GM12878 (cell line): ENCODE measurements at regions of chr17 and their contacts with region 1.

Region 1: DNA sequence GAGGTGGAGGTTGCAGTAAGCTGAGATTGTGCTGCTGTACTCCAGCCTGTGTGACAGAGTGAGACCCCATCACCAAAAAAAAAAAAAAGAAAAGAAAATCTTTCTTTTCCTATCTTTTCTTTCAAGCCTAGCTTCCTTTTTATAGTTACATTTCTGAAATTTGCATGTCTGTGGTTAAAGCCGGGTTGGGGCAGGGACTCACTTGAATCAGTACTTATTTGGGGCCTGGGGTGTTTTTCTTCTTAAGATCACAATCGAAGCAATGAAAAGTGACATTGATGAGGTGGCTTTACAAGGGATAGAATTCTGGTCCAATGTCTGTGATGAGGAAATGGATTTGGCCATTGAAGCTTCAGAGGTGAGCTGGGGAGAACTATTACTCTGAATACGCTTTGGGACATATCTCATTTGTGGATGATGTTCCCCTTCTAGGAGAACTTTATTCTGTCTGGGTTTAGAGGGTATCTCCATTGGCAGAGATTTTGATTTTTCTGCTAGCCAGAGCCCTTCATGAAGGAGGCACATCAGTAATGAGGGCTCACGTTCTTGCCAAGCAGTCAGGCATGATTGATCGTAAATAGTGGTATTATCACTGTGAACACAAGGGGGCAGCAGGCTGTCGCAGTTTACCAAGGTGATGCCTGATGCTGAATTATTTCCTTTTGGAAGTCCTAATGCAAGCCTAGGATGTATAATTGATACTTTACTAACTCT is 14.3 kb downstream of the KPNB1 start:
- DNase-seq: peak; percentile 41
- ATAC-seq: peak; percentile 84
- H3K4me3 ChIP-seq: 0 out of 2 replicates have a peak overlapping the region, but pooled peaks have one; percentile 35
- H3K27ac ChIP-seq: peak overlapping the region; percentile 50
- H3K4me1 ChIP-seq: peaks cover 32% of the 10 kb centered on the region
- H3K27me3 ChIP-seq: no peaks in the 10 kb centered on the region
- CTCF ChIP-seq: peak; percentile 71 to 87 (median 72)
- EP300 ChIP-seq: no peak
- POLR2A ChIP-seq: peak; percentile 56; the same call in 1 of the 2 replicates
- RAD21 ChIP-seq: peak; percentile 55

Region 2: GRCh38 chr17:47649153-47649971 is 14.7 kb before region 1 on chr17 and contains the start of gene KPNB1:
- CTCF ChIA-PET with region 1: interaction called, 75 read pairs
- POLR2A ChIA-PET with region 1: interaction called, 18 read pairs
- RAD21 ChIA-PET with region 1: interaction called, 21 read pairs
- SMC1A ChIA-PET with region 1: interaction called, 20 read pairs
- in situ Hi-C with region 1: no loop called
- intact Hi-C with region 1: no loop called
- DNase-seq: peak; percentile 99
- ATAC-seq: peak; percentile 88
- H3K4me3 ChIP-seq: peak within 1 kb of the TSS; percentile 84
- H3K27ac ChIP-seq: peak within 1 kb of the TSS; percentile 99
- H3K4me1 ChIP-seq: peaks cover 22% of the 10 kb centered on the region
- H3K27me3 ChIP-seq: no peaks in the 10 kb centered on the region
- CTCF ChIP-seq: no peak
- EP300 ChIP-seq: peak in 1 of 2 experiments; percentile 52; a peak in 2 of 4 replicates
- POLR2A ChIP-seq: peak; percentile 76
- RAD21 ChIP-seq: no peak
- polyA plus RNA-seq, gene KPNB1: 130 to 233 TPM

Region 3: DNA sequence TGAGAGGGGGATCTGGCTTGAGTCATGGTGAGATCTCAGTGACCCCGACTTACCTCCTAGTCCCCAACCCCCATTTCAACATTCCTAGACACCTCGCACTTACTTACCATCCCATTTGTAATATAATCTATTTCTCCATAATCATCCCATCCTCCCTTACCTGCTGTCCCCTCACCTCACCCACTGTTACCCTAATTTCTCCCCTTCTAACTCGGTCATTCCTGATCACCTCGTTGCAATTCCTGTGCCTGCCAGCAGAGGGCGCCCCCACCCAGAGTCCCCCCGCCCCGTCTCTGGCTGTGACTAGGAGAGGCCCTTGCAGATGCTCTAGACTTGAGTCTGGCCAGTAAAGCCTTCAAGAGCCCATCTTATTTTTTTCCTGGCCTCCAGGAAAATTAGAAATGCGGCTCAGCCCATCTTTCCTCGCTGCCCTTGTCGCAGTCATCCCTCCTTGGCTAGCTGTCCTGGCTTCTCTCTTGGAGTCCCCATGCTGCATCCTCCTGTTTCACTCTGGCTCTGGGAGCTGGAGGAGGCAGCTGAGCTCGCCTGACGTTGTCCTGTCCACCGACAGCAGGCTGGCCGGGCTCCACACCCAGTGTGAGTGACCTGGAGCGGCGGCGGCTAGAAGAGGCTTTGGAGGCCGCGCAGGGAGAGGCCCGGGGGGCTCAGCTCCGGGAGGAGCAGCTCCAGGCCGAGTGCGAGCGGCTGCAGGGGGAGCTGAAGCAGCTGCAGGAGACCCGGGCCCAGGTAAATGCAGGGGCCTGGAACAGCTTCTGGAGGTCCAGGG is 34.9 kb after region 1 on chr17:
- CTCF ChIA-PET with region 1: interaction called, 30 read pairs
- POLR2A ChIA-PET with region 1: no interaction called
- RAD21 ChIA-PET with region 1: interaction called, 8 read pairs
- SMC1A ChIA-PET with region 1: interaction called, 4 read pairs
- in situ Hi-C with region 1: no loop called
- intact Hi-C with region 1: no loop called
- DNase-seq: no peak
- ATAC-seq: peak; percentile 60
- H3K4me3 ChIP-seq: no peak overlapping the region
- H3K27ac ChIP-seq: no peak overlapping the region
- H3K4me1 ChIP-seq: peaks cover 22% of the 10 kb centered on the region
- H3K27me3 ChIP-seq: no peaks in the 10 kb centered on the region; a peak in 1 of 4 replicates
- CTCF ChIP-seq: peak; percentile 86 to 97 (median 88)
- EP300 ChIP-seq: no peak
- POLR2A ChIP-seq: no peak
- RAD21 ChIP-seq: peak; percentile 93

Region 4: GRCh38 chr17:47742319-47743181 is 78.5 kb after region 1 on chr17:
- CTCF ChIA-PET with region 1: interaction called, 5 read pairs
- POLR2A ChIA-PET with region 1: no interaction called
- RAD21 ChIA-PET with region 1: interaction called, 3 read pairs
- SMC1A ChIA-PET with region 1: interaction called, 17 read pairs
- in situ Hi-C with region 1: no loop called
- intact Hi-C with region 1: loop called (anchors 10 kb)
- DNase-seq: no peak
- ATAC-seq: peak; percentile 85
- H3K4me3 ChIP-seq: no peak overlapping the region
- H3K27ac ChIP-seq: no peak overlapping the region
- H3K4me1 ChIP-seq: peaks cover 18% of the 10 kb centered on the region
- H3K27me3 ChIP-seq: no peaks in the 10 kb centered on the region
- CTCF ChIP-seq: peak; percentile 46 to 59 (median 55)
- EP300 ChIP-seq: no peak
- POLR2A ChIP-seq: no peak
- RAD21 ChIP-seq: peak; percentile 66

Region 5: GRCh38 chr17:47802341-47803022 is 138.4 kb after region 1 on chr17:
- CTCF ChIA-PET with region 1: interaction called, 17 read pairs
- POLR2A ChIA-PET with region 1: no interaction called
- RAD21 ChIA-PET with region 1: interaction called, 8 read pairs
- SMC1A ChIA-PET with region 1: interaction called, 8 read pairs
- in situ Hi-C with region 1: no loop called
- intact Hi-C with region 1: loop called (anchors 2 kb)
- DNase-seq: no peak
- ATAC-seq: peak; percentile 98
- H3K4me3 ChIP-seq: no peak overlapping the region
- H3K27ac ChIP-seq: no peak overlapping the region
- H3K4me1 ChIP-seq: no peaks in the 10 kb centered on the region
- H3K27me3 ChIP-seq: no peaks in the 10 kb centered on the region
- CTCF ChIP-seq: peak; percentile 69 to 83 (median 77)
- EP300 ChIP-seq: no peak
- POLR2A ChIP-seq: no peak
- RAD21 ChIP-seq: peak; percentile 74